CD8-positive, alpha-beta T cell (primary cell): ENCODE measurements at regions of chr19 and their contacts with region 1.

Region 1: GRCh38 chr19:58362272-58362994 is at the start of gene ZNF497:
- DNase-seq: peak; percentile 95 to 99 (median 97)
- ATAC-seq: peak; percentile 86
- H3K4me3 ChIP-seq: peak within 1 kb of the TSS; percentile 71 to 78
- H3K4me3 Mint-ChIP-seq: peak within 1 kb of the TSS; percentile 95
- H3K27ac ChIP-seq: peak within 1 kb of the TSS; percentile 82 to 84
- H3K27ac Mint-ChIP-seq: peak within 1 kb of the TSS; percentile 92
- H3K4me1 ChIP-seq: peaks cover 18% of the 10 kb centered on the region
- H3K4me1 Mint-ChIP-seq: peaks cover 23% of the 10 kb centered on the region
- H3K27me3 ChIP-seq: no peaks in the 10 kb centered on the region
- H3K27me3 Mint-ChIP-seq: no peaks in the 10 kb centered on the region
- CTCF ChIP-seq: no peak
- total RNA-seq, gene ZNF497: 0.79 to 1.2 TPM

Region 2: GRCh38 chr19:58278157-58279041 is 84.0 kb before region 1 on chr19 and contains the start of gene ZNF8:
- CTCF ChIA-PET with region 1: no interaction called
- POLR2A ChIA-PET with region 1: interaction called, 6 read pairs
- intact Hi-C with region 1: loop called in 1 of 2 experiments (anchors 1 kb)
- DNase-seq: peak; percentile 89 to 99 (median 97)
- ATAC-seq: peak; percentile 97
- H3K4me3 ChIP-seq: peak within 1 kb of the TSS; percentile 67 to 92
- H3K4me3 Mint-ChIP-seq: peak within 1 kb of the TSS; percentile 99
- H3K27ac ChIP-seq: peak within 1 kb of the TSS; percentile 72 to 85
- H3K27ac Mint-ChIP-seq: peak within 1 kb of the TSS; percentile 96
- H3K4me1 ChIP-seq: peaks cover 26% of the 10 kb centered on the region
- H3K4me1 Mint-ChIP-seq: peaks cover 50% of the 10 kb centered on the region
- H3K27me3 ChIP-seq: no peaks in the 10 kb centered on the region
- H3K27me3 Mint-ChIP-seq: no peaks in the 10 kb centered on the region
- CTCF ChIP-seq: no peak
- total RNA-seq, gene ZNF8: 9.2 to 9.5 TPM

Region 3: DNA sequence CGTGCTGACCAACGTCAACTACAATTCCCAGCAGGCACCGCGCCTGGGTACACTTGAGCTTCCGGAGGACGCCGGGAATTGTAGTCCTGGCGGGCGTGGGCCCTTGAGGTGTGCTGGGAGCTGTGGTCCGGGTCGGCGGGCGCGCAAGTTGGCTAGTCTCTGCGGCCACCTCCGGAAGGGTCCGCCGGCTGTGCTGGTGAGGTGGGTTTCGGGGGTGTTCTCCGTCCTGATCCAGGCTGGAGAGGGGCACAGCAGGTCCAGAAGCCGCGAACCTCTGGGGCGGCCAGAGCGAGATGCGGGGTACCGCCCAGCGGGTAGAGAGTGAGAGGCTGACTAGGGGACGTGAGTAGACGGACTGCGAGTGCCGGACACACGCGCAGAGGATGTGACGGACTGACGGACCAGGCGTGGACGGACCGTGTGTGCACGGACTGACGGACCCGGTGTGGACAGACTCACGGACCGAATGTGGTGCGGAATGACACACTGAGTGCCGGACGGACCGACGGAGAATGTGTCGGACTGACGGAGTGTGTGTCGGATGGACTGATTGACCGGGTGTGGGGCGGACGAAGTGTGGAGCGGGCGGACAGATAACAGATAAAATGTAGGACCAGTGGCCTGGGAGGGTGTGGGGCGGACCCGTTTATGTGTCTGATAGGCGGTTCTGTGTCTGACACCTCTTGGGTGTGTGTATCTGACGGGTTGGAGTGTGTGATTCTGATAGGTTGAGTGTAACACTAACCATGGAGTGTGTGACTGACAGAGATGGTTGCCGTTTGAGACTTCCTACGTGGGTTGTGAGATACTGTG is 35.3 kb before region 1 on chr19 and contains the start of gene ZSCAN22:
- CTCF ChIA-PET with region 1: interaction called, 3 read pairs
- POLR2A ChIA-PET with region 1: interaction called, 6 read pairs
- intact Hi-C with region 1: loop called (anchors 1 kb)
- DNase-seq: peak; percentile 76 to 94 (median 89)
- ATAC-seq: peak; percentile 78
- H3K4me3 ChIP-seq: peak within 1 kb of the TSS; percentile 84 to 96
- H3K4me3 Mint-ChIP-seq: no peak within 1 kb of the TSS
- H3K27ac ChIP-seq: peak within 1 kb of the TSS; percentile 77 to 96
- H3K27ac Mint-ChIP-seq: no peak within 1 kb of the TSS
- H3K4me1 ChIP-seq: peaks cover 19% of the 10 kb centered on the region
- H3K4me1 Mint-ChIP-seq: peaks cover 3% of the 10 kb centered on the region
- H3K27me3 ChIP-seq: no peaks in the 10 kb centered on the region
- H3K27me3 Mint-ChIP-seq: no peaks in the 10 kb centered on the region
- CTCF ChIP-seq: no peak
- total RNA-seq, gene ZSCAN22: 1.7 to 2.2 TPM

Region 4: GRCh38 chr19:58386576-58387337 is 24.3 kb after region 1 on chr19 and contains the start of gene RPS5:
- CTCF ChIA-PET with region 1: no interaction called
- POLR2A ChIA-PET with region 1: interaction called, 8 read pairs
- intact Hi-C with region 1: loop called (anchors 1 kb)
- DNase-seq: peak; percentile 92 to 100 (median 95)
- ATAC-seq: peak; percentile 88
- H3K4me3 ChIP-seq: peak within 1 kb of the TSS; percentile 88 to 90
- H3K4me3 Mint-ChIP-seq: peak within 1 kb of the TSS; percentile 93
- H3K27ac ChIP-seq: peak within 1 kb of the TSS; percentile 94 to 98
- H3K27ac Mint-ChIP-seq: peak within 1 kb of the TSS; percentile 99
- H3K4me1 ChIP-seq: peaks cover 41% of the 10 kb centered on the region
- H3K4me1 Mint-ChIP-seq: peaks cover 52% of the 10 kb centered on the region
- H3K27me3 ChIP-seq: no peaks in the 10 kb centered on the region
- H3K27me3 Mint-ChIP-seq: no peaks in the 10 kb centered on the region
- CTCF ChIP-seq: no peak
- total RNA-seq, gene RPS5: 1,884 to 1,887 TPM

Region 5: DNA sequence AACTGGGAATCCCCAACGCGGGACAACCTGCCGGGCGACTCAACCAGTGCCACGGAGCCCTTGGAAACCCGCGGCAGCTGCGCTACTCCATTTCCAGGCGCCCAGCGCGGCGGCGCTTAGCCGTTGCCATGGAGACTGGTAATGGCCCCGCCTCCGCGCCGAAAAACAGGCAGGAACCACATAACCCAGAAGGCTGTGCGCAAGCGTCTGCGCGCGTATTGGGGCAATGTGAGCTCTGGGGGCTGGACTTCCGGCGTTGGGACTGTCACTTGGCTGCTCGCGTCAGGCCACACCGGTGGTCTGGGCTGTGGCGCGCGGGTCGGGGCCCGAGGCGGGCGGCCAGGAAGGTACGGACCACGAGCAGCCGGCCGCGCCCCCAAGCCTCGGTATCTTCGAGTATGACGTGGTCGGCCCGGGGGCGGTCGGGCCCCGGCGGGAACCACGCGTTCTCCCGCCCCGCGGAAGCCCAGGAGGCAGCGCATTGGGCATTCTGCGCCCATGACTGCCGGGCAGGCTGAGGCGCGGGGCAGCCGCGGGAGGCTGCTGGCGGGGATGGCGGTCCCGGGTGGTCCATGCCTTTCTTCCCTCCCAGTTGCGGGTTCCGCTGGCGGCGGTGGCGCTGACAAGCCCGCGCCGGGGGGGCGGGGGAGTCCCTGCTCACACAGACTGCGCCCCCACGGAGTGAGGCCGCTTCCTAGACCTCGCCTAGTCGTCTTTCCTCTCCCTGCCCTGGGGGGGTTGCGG is 89.1 kb after region 1 on chr19 and contains the start of gene ZNF324B:
- CTCF ChIA-PET with region 1: no interaction called
- POLR2A ChIA-PET with region 1: interaction called, 5 read pairs
- intact Hi-C with region 1: loop called (anchors 1 kb)
- DNase-seq: peak; percentile 92 to 98 (median 96)
- ATAC-seq: peak; percentile 96
- H3K4me3 ChIP-seq: peak within 1 kb of the TSS; percentile 55 to 83
- H3K4me3 Mint-ChIP-seq: peak within 1 kb of the TSS; percentile 82
- H3K27ac ChIP-seq: peak within 1 kb of the TSS; percentile 44 to 70
- H3K27ac Mint-ChIP-seq: peak within 1 kb of the TSS; percentile 27
- H3K4me1 ChIP-seq: peaks cover 10% of the 10 kb centered on the region
- H3K4me1 Mint-ChIP-seq: peaks cover 16% of the 10 kb centered on the region
- H3K27me3 ChIP-seq: peaks cover 0 to 9% of the 10 kb centered on the region in 2 experiments
- H3K27me3 Mint-ChIP-seq: peaks cover 9% of the 10 kb centered on the region
- CTCF ChIP-seq: no peak
- total RNA-seq, gene ZNF324B: 6.2 to 6.5 TPM

Region 6: GRCh38 chr19:58475714-58476497 is 113.5 kb after region 1 on chr19 and contains the start of gene ZNF446:
- CTCF ChIA-PET with region 1: no interaction called
- POLR2A ChIA-PET with region 1: no interaction called
- intact Hi-C with region 1: loop called (anchors 1 kb)
- DNase-seq: peak; percentile 92 to 99 (median 97)
- ATAC-seq: peak; percentile 82
- H3K4me3 ChIP-seq: peak within 1 kb of the TSS; percentile 56 to 72
- H3K4me3 Mint-ChIP-seq: peak within 1 kb of the TSS; percentile 92
- H3K27ac ChIP-seq: peak within 1 kb of the TSS; percentile 75 to 95
- H3K27ac Mint-ChIP-seq: peak within 1 kb of the TSS; percentile 97
- H3K4me1 ChIP-seq: peaks cover 17% of the 10 kb centered on the region
- H3K4me1 Mint-ChIP-seq: peaks cover 16% of the 10 kb centered on the region
- H3K27me3 ChIP-seq: no peaks in the 10 kb centered on the region
- H3K27me3 Mint-ChIP-seq: no peaks in the 10 kb centered on the region
- CTCF ChIP-seq: no peak
- total RNA-seq, gene ZNF446: 14.6 to 16.5 TPM